K562 (cell line): ENCODE measurements at regions of chr7 and their contacts with region 1.

Region 1: DNA sequence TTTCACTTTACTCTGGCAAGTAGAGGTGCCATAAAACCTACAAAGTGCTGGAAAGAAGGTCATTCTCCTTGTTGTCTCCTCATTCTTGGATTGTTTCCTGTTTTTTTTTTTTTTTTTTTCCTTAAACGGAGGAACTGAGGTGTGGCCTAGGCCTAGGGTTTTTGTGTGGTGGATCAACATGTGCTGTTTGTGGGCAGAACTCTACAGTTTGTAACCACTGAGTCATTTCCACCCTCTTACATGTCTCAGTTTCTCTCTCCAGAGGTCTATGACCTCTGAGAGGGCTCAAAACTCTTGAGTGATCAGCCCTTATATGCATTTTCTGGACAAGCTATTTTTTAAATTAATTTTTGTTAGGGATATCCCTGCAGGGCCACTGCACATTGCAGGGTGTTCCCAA is 296.0 kb downstream of the PPP1R3A start:
- DNase-seq: no peak
- ATAC-seq: no peak
- H3K4me3 ChIP-seq: no peak overlapping the region
- H3K27ac ChIP-seq: no peak overlapping the region
- H3K4me1 ChIP-seq: no peaks in the 10 kb centered on the region
- H3K27me3 ChIP-seq: no peaks in the 10 kb centered on the region
- CTCF ChIP-seq: no peak
- EP300 ChIP-seq: no peak
- POLR2A ChIP-seq: no peak
- RAD21 ChIP-seq: no peak

Region 2: GRCh38 chr7:113664867-113665266 is 42.1 kb after region 1 on chr7:
- CTCF ChIA-PET with region 1: no interaction called
- POLR2A ChIA-PET with region 1: no interaction called
- in situ Hi-C with region 1: no loop called
- intact Hi-C with region 1: loop called (anchors 5 kb)
- DNase-seq: no peak
- ATAC-seq: no peak
- H3K4me3 ChIP-seq: no peak overlapping the region
- H3K27ac ChIP-seq: no peak overlapping the region
- H3K4me1 ChIP-seq: no peaks in the 10 kb centered on the region
- H3K27me3 ChIP-seq: no peaks in the 10 kb centered on the region
- CTCF ChIP-seq: no peak
- EP300 ChIP-seq: no peak
- POLR2A ChIP-seq: no peak
- RAD21 ChIP-seq: no peak